Caco-2 (cell line): ENCODE measurements at regions of chr15 and their contacts with region 1.

Region 1: GRCh38 chr15:25693321-25694237 is 169.5 kb downstream of the ATP10A start:
- DNase-seq: peak; percentile 37 to 42
- H3K4me3 ChIP-seq: no peak overlapping the region
- H3K4me3 Mint-ChIP-seq: no peak overlapping the region
- H3K27ac Mint-ChIP-seq: no peak overlapping the region
- H3K4me1 ChIP-seq: no peaks in the 10 kb centered on the region
- H3K4me1 Mint-ChIP-seq: peaks cover 6% of the 10 kb centered on the region
- H3K27me3 ChIP-seq: no peaks in the 10 kb centered on the region
- H3K27me3 Mint-ChIP-seq: peaks cover 4% of the 10 kb centered on the region
- CTCF ChIP-seq: peak; percentile 31 to 42

Region 2: GRCh38 chr15:25019434-25019833 is 674.1 kb before region 1 on chr15:
- CTCF ChIA-PET with region 1: interaction called, 14 read pairs
- POLR2A ChIA-PET with region 1: no interaction called
- intact Hi-C with region 1: no loop called
- DNase-seq: no peak
- H3K4me3 ChIP-seq: no peak overlapping the region
- H3K4me3 Mint-ChIP-seq: no peak overlapping the region
- H3K27ac Mint-ChIP-seq: no peak overlapping the region
- H3K4me1 ChIP-seq: no peaks in the 10 kb centered on the region
- H3K4me1 Mint-ChIP-seq: no peaks in the 10 kb centered on the region
- H3K27me3 ChIP-seq: no peaks in the 10 kb centered on the region
- H3K27me3 Mint-ChIP-seq: no peaks in the 10 kb centered on the region
- CTCF ChIP-seq: no peak

Region 3: DNA sequence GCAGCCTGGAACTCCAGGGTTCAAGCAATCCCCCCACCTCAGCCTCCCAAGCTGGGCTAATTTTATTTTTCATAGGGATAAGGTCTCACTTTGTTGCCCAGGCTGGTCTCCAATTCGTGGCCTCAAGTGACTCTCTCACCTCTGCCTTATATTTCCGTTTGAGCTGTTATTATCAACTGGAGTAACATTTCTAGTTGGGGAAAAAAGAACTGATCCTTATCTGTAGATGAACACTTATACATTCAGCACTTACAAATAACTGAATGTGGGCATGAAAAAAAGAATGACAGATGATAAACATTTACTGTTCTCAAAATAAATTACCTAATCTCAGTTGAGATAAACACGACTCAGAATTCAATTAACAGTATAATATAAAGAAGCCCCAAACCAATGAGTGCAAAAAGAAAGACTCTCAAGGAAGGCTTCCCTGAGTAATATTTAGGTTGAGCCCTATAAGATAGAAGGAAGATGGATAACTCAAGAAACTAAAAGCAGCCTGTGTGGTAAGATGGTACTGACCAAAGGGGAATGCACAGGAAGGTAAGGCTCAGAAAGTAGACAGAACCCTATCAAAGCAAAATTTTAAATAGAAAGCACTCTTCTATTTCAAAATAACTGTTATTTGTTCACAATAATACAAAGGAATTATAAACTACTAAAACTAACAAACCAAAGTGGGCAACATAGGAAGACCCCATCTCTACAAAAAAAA is 266.5 kb before region 1 on chr15:
- CTCF ChIA-PET with region 1: no interaction called
- POLR2A ChIA-PET with region 1: no interaction called
- intact Hi-C with region 1: no loop called
- DNase-seq: no peak
- H3K4me3 ChIP-seq: no peak overlapping the region
- H3K4me3 Mint-ChIP-seq: no peak overlapping the region
- H3K27ac Mint-ChIP-seq: no peak overlapping the region
- H3K4me1 ChIP-seq: no peaks in the 10 kb centered on the region
- H3K4me1 Mint-ChIP-seq: peaks cover 9% of the 10 kb centered on the region
- H3K27me3 ChIP-seq: no peaks in the 10 kb centered on the region
- H3K27me3 Mint-ChIP-seq: no peaks in the 10 kb centered on the region
- CTCF ChIP-seq: no peak

Region 4: GRCh38 chr15:25508369-25509002 is 185.1 kb before region 1 on chr15:
- CTCF ChIA-PET with region 1: interaction called, 25 read pairs
- POLR2A ChIA-PET with region 1: interaction called, 4 read pairs
- intact Hi-C with region 1: loop called (anchors 1 kb)
- DNase-seq: peak in 1 of 2 experiments; percentile 25
- H3K4me3 ChIP-seq: no peak overlapping the region
- H3K4me3 Mint-ChIP-seq: no peak overlapping the region
- H3K27ac Mint-ChIP-seq: no peak overlapping the region
- H3K4me1 ChIP-seq: no peaks in the 10 kb centered on the region
- H3K4me1 Mint-ChIP-seq: no peaks in the 10 kb centered on the region
- H3K27me3 ChIP-seq: no peaks in the 10 kb centered on the region
- H3K27me3 Mint-ChIP-seq: peaks cover 5% of the 10 kb centered on the region
- CTCF ChIP-seq: peak; percentile 67 to 68

Region 5: DNA sequence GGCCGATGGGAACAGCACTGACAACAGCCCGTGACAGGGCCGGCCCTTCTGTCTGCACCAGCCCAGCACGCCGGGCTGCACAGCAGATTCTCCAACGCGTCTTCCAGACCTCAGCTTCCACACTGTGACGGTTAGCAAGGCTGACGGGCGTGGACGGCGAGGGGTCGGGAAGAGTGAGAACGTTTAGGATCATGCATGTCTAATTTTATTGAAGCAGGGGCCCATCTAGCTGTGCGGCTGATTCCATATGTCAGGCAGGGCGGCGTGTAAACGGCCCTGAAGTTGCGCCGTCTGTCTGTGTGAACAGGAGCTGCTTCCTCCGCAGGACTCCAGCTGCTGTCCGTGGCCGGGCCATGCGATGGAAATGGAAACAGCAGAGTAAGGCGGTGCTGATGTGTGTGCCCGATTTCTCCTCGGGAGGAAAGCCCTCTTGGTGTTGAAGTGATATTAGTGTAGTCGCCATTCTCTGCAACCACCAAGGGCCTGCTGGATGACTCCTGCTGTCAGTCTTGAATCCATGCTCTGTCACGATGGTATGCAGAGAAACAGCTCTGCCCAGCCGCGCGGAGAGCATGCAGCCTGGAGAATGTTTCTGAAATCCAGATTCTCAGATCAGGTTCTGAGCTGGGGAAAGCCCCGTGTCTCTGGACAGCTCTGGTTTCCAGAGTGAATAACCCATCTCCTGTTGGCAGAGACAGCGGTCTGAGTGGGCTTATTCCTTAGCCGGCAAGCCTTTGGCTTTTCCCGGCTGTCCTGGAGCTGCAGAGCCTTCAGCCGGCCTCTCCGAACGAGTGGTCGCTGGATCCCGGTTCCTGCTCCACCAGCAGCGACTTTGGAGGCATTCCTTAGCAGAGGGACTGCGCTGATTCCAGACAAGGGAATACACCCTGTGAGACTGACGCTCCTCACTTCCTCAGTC is 96.7 kb before region 1 on chr15:
- CTCF ChIA-PET with region 1: no interaction called
- POLR2A ChIA-PET with region 1: no interaction called
- intact Hi-C with region 1: loop called (anchors 5 kb)
- DNase-seq: no peak
- H3K4me3 ChIP-seq: no peak overlapping the region
- H3K4me3 Mint-ChIP-seq: no peak overlapping the region
- H3K27ac Mint-ChIP-seq: no peak overlapping the region
- H3K4me1 ChIP-seq: no peaks in the 10 kb centered on the region
- H3K4me1 Mint-ChIP-seq: no peaks in the 10 kb centered on the region
- H3K27me3 ChIP-seq: no peaks in the 10 kb centered on the region
- H3K27me3 Mint-ChIP-seq: no peaks in the 10 kb centered on the region
- CTCF ChIP-seq: no peak

Region 6: GRCh38 chr15:25641762-25642161 is 51.8 kb before region 1 on chr15:
- CTCF ChIA-PET with region 1: interaction called, 4 read pairs
- POLR2A ChIA-PET with region 1: no interaction called
- intact Hi-C with region 1: loop called (anchors 5 kb)
- DNase-seq: no peak
- H3K4me3 ChIP-seq: no peak overlapping the region
- H3K4me3 Mint-ChIP-seq: peak overlapping the region; percentile 14
- H3K27ac Mint-ChIP-seq: peak overlapping the region; percentile 22
- H3K4me1 ChIP-seq: peaks cover 29% of the 10 kb centered on the region
- H3K4me1 Mint-ChIP-seq: peaks cover 35% of the 10 kb centered on the region
- H3K27me3 ChIP-seq: no peaks in the 10 kb centered on the region
- H3K27me3 Mint-ChIP-seq: no peaks in the 10 kb centered on the region
- CTCF ChIP-seq: no peak

Region 7: DNA sequence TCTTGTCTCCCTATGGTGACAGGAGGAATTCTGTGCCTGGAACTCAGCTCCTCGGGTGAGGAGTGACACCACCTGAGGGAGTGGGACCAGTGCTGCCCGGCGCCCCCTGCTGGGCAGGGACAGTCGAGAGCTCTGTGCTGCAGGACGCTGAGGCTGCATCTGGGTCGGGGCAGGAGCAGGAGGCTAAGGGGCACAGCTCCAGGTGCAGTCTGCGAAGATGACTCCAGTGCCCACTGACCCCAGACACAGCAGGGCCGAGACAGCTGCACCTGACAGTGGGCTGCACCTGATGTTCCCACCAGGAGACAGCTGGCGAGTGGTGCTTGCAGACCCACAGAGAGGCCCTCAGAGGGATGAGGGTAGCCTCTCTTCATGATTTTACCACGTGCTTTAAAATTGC is 16.6 kb after region 1 on chr15:
- CTCF ChIA-PET with region 1: interaction called, 12 read pairs
- POLR2A ChIA-PET with region 1: no interaction called
- intact Hi-C with region 1: no loop called
- DNase-seq: peak; percentile 64 to 78
- H3K4me3 ChIP-seq: no peak overlapping the region
- H3K4me3 Mint-ChIP-seq: no peak overlapping the region
- H3K27ac Mint-ChIP-seq: no peak overlapping the region
- H3K4me1 ChIP-seq: no peaks in the 10 kb centered on the region
- H3K4me1 Mint-ChIP-seq: no peaks in the 10 kb centered on the region
- H3K27me3 ChIP-seq: no peaks in the 10 kb centered on the region
- H3K27me3 Mint-ChIP-seq: no peaks in the 10 kb centered on the region
- CTCF ChIP-seq: peak; percentile 85 to 90